ENCODE measurements at regions of chr18 and their contacts with region 1.

Region 1: DNA sequence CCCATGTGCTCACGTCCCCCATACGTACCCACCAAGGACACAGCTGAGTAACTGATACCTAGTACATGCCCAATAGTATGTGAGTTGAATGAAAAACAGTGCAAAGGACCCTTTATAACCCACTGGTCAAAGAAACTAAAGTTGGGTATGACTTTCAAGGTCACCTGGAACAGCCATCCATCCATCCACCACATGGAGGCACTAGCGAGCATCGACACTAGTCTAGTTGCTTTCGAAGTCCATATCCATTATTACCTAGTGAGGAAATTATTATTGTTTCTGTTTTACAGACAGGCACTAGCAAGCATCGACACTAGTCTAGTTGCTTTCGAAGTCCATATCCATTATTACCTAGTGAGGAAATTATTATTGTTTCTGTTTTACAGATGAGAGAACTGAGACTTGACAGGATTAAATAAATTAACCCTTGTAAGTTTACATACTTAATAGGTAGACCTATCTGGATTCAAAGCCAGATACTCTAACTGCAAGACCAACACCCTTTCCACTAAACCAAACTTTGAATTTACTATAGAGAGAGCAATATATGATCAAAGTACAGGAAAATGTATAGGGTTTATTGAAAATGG is 233.7 kb downstream of the METTL4 start:
- DNase-seq: peak; percentile 15
- H3K4me3 ChIP-seq: no peak overlapping the region
- H3K27ac ChIP-seq: no peak overlapping the region
- H3K4me1 ChIP-seq: no peaks in the 10 kb centered on the region
- H3K27me3 ChIP-seq: no peaks in the 10 kb centered on the region
- CTCF ChIP-seq: peak; percentile 63 to 67

Region 2: GRCh38 chr18:2302614-2303516 is 34.8 kb before region 1 on chr18:
- CTCF ChIA-PET with region 1: no interaction called
- dilution Hi-C with region 1: no loop called
- in situ Hi-C with region 1: no loop called
- intact Hi-C with region 1: loop called (anchors 5 kb)
- DNase-seq: peak; percentile 76
- H3K4me3 ChIP-seq: peak overlapping the region in 1 of 3 experiments; percentile 12
- H3K27ac ChIP-seq: peak overlapping the region; percentile 89
- H3K4me1 ChIP-seq: peaks cover 31% of the 10 kb centered on the region
- H3K27me3 ChIP-seq: no peaks in the 10 kb centered on the region
- CTCF ChIP-seq: no peak

Region 3: GRCh38 chr18:2471523-2471922 is 133.9 kb after region 1 on chr18:
- CTCF ChIA-PET with region 1: no interaction called
- dilution Hi-C with region 1: no loop called
- in situ Hi-C with region 1: no loop called
- intact Hi-C with region 1: loop called (anchors 2 kb)
- DNase-seq: no peak
- H3K4me3 ChIP-seq: no peak overlapping the region
- H3K27ac ChIP-seq: no peak overlapping the region
- H3K4me1 ChIP-seq: no peaks in the 10 kb centered on the region
- H3K27me3 ChIP-seq: no peaks in the 10 kb centered on the region
- CTCF ChIP-seq: peak; percentile 20 to 32

Region 4: GRCh38 chr18:2536493-2536892 is 198.8 kb after region 1 on chr18:
- CTCF ChIA-PET with region 1: no interaction called
- dilution Hi-C with region 1: no loop called
- in situ Hi-C with region 1: loop called (anchors 10 to 25 kb)
- intact Hi-C with region 1: no loop called
- DNase-seq: no peak
- H3K4me3 ChIP-seq: no peak overlapping the region
- H3K27ac ChIP-seq: no peak overlapping the region
- H3K4me1 ChIP-seq: no peaks in the 10 kb centered on the region
- H3K27me3 ChIP-seq: no peaks in the 10 kb centered on the region
- CTCF ChIP-seq: no peak

Region 5: DNA sequence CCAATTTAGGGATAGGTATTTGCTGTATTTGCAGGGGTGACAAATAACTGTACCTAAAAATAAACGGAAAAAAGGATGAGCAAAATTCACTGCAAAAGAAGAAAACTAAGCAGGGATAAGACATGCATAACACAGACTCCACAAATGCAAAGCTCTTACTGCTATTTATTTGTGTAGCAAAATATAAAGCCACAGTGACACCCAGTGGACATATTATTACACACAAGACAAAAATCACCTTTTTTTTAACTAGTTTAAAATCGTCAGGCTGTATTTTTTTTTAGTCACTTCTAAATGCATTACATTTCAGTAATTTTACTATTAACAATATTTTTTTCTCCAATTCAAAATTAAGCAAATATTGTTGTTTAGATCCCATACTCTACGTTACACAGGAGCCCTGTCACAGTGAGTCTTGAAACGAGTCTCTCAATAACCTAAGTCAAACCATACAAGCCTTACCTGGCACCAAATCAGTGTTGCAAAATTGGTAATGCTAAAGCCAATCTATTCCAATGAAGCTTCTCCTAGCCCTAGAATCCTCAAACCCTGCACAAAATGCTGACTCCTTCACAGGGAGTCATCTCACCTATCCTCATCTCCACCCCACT is 209.9 kb after region 1 on chr18:
- CTCF ChIA-PET with region 1: no interaction called
- dilution Hi-C with region 1: no loop called
- in situ Hi-C with region 1: loop called in 1 of 2 experiments (anchors 25 kb)
- intact Hi-C with region 1: loop called (anchors 1 kb)
- DNase-seq: peak; percentile 19
- H3K4me3 ChIP-seq: no peak overlapping the region
- H3K27ac ChIP-seq: no peak overlapping the region
- H3K4me1 ChIP-seq: no peaks in the 10 kb centered on the region
- H3K27me3 ChIP-seq: no peaks in the 10 kb centered on the region
- CTCF ChIP-seq: peak; percentile 39 to 42